ENCODE measurements at regions of chr5 and their contacts with region 1.

Region 1: DNA sequence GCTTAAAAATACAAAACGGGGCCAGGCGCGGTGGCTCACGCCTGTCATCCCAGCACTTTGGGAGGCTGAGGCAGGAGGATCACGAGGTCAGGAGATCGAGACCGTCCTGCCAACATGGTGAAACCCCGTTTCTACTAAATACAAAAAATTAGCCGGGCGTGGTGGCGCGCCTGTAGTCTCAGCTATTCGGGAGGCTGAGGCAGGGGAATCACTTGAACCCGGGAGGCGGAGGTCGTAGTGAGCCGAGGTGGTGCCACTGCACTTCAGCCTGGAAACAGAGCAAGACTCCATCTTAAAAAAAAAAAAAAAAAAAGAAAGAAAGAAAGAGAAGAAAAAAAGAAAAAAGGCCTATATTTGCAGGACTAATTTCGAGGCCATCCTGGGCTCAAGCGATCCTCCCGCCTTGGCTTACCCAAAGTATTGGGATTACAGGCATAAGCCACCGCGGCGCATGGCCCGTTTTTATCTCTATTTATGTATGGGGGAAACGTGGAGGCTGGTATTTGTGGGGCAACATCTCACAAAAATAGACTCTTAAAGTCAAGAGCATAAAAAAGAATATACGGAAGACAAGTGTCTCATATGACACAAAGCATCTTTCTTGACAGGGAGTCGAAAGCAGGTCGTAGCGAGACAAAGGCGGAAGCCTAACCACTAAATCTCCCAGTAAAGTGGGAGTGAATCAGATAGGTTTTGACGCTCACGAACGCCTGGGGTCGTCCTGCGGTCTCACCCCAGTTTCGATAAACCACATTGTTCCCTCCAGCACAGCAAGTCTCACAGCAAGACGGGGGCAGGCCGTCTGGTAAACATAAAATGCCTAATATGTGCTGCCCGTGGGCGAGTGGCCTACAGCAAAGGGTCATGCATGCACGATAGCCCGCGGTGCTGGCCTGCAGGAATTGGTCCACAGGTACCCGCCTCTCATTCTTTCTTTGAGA is 2.0 kb upstream of the TRIM41 start:
- DNase-seq: peak in 34 of 35 experiments; percentile 43 to 85 (median 68)
- ATAC-seq: peak in 1 of 4 experiments; percentile 2
- H3K4me3 ChIP-seq: peak overlapping the region; percentile 77 to 82
- H3K4me3 Mint-ChIP-seq: peak overlapping the region; percentile 92 to 97 (median 92)
- H3K27ac ChIP-seq: peak overlapping the region; percentile 94
- H3K27ac Mint-ChIP-seq: peak overlapping the region; percentile 90 to 98
- H3K4me1 ChIP-seq: peaks cover 22 to 84% of the 10 kb centered on the region in 2 experiments
- H3K4me1 Mint-ChIP-seq: peaks cover 62 to 83% (median 68%) of the 10 kb centered on the region in 3 donors
- H3K27me3 ChIP-seq: no peaks in the 10 kb centered on the region
- H3K27me3 Mint-ChIP-seq: peaks cover 0 to 9% of the 10 kb centered on the region in 2 donors

Region 2: GRCh38 chr5:180844432-180844831 is 376.7 kb before region 1 on chr5:
- CTCF ChIA-PET with region 1: no interaction called
- POLR2A ChIA-PET with region 1: no interaction called
- DNase-seq: no peak
- ATAC-seq: no peak
- H3K4me3 ChIP-seq: no peak overlapping the region
- H3K4me3 Mint-ChIP-seq: no peak overlapping the region
- H3K27ac ChIP-seq: no peak overlapping the region
- H3K27ac Mint-ChIP-seq: peak overlapping the region in 1 of 2 donors; percentile 16
- H3K4me1 ChIP-seq: no peaks in the 10 kb centered on the region
- H3K4me1 Mint-ChIP-seq: no peaks in the 10 kb centered on the region
- H3K27me3 ChIP-seq: no peaks in the 10 kb centered on the region
- H3K27me3 Mint-ChIP-seq: no peaks in the 10 kb centered on the region

Region 3: DNA sequence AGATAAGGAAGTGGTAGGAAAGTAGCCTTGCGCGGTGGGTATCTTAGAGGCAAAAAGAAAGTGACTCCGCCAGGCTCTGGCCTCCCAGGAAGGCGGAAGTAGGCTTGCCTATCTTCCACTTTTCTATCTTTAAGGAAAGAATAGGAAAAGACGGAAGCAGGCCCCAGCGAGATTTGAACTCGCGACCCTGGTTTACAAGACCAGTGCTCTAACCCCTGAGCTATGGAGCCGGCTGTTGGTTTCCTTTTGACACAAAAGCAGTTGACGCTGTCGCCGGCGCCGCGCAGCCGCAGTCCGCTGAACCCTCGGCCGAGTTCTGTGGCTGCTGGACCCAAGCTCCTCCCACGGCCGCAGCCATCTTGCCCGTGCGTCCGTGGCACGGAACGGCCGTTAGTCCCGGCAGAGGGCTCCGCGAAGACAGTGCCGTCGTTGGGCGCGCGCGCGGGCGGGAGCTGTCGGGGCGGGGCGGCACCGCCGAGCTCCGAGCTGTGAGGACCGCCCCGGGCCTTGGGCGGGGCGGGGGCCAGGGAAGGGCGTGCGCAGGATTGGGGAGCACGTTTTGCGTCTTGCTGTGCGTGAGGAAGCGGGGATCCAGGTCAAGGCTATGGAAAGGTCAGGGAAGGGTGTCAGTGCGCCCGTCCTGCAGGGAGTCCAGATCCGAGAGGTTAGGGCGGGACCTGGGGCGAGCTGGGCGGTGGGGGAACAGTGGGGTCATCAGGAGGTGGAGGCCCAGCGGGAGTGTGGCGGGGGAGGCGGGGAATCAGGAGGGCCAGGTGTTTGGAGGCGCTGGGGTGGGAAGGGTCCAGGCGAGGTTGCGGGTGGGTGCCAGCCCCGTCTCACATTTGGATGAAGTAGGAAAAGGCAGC is 29.4 kb before region 1 on chr5:
- CTCF ChIA-PET with region 1: interaction called in 1 of 2 experiments, 6 read pairs
- POLR2A ChIA-PET with region 1: interaction called, 4 to 11 read pairs
- DNase-seq: peak; percentile 78 to 99 (median 93)
- ATAC-seq: peak; percentile 60 to 74 (median 68)
- H3K4me3 ChIP-seq: peak overlapping the region; percentile 70 to 99
- H3K4me3 Mint-ChIP-seq: peak overlapping the region; percentile 94 to 95 (median 94)
- H3K27ac ChIP-seq: peak overlapping the region; percentile 69
- H3K27ac Mint-ChIP-seq: peak overlapping the region; percentile 95 to 96
- H3K4me1 ChIP-seq: peaks cover 2 to 42% of the 10 kb centered on the region in 2 experiments
- H3K4me1 Mint-ChIP-seq: peaks cover 32 to 54% (median 34%) of the 10 kb centered on the region in 3 donors
- H3K27me3 ChIP-seq: no peaks in the 10 kb centered on the region
- H3K27me3 Mint-ChIP-seq: peaks cover 6 to 12% of the 10 kb centered on the region in 2 donors